ENCODE measurements at regions of chr11 and their contacts with region 1.

Region 1: GRCh38 chr11:128157423-128158298 is 429.7 kb downstream of the ETS1 start:
- DNase-seq: peak; percentile 68
- ATAC-seq: peak; percentile 91
- H3K4me3 Mint-ChIP-seq: peak overlapping the region; percentile 60
- H3K27ac Mint-ChIP-seq: peak overlapping the region; percentile 86
- H3K4me1 Mint-ChIP-seq: peaks cover 10% of the 10 kb centered on the region
- H3K27me3 Mint-ChIP-seq: no peaks in the 10 kb centered on the region

Region 2: DNA sequence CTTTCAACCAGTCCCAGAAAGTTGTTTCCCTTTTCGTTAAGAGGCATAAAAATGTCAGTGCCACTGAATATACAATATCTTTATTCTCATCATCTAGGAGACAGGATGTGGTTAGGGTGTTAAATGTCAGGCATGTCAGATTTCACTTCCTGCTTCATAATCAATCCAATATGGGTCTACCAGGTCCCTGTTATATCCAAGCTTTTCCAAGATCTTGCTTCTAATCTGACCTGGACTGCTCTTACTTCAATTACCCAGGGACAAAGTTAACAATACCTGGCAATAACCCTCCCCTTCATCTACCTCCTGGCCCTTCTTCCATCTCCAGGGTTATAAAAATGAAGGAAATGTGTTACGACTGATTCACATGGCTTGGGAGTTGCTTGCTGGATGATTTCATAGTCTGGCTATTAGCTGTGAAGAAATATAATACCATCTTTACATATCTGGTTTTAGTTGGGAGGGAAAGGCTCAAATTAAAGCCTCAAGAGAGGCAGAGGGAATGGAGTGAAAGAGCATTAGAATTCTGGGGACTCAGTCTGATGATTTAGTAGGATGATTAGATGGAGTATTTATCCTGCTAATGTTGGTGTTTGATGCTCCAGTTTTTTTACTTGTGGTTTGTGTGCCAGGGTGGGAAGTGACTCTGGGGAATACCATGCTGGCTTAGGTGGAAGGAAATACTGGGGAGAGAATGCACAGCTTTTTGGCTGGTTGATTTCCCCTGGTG is 104.6 kb before region 1 on chr11:
- CTCF ChIA-PET with region 1: interaction called, 10 read pairs
- POLR2A ChIA-PET with region 1: no interaction called
- intact Hi-C with region 1: no loop called
- DNase-seq: no peak
- ATAC-seq: peak; percentile 63
- H3K4me3 Mint-ChIP-seq: peak overlapping the region; percentile 25
- H3K27ac Mint-ChIP-seq: peak overlapping the region; percentile 87
- H3K4me1 Mint-ChIP-seq: peaks cover 65% of the 10 kb centered on the region
- H3K27me3 Mint-ChIP-seq: no peaks in the 10 kb centered on the region

Region 3: DNA sequence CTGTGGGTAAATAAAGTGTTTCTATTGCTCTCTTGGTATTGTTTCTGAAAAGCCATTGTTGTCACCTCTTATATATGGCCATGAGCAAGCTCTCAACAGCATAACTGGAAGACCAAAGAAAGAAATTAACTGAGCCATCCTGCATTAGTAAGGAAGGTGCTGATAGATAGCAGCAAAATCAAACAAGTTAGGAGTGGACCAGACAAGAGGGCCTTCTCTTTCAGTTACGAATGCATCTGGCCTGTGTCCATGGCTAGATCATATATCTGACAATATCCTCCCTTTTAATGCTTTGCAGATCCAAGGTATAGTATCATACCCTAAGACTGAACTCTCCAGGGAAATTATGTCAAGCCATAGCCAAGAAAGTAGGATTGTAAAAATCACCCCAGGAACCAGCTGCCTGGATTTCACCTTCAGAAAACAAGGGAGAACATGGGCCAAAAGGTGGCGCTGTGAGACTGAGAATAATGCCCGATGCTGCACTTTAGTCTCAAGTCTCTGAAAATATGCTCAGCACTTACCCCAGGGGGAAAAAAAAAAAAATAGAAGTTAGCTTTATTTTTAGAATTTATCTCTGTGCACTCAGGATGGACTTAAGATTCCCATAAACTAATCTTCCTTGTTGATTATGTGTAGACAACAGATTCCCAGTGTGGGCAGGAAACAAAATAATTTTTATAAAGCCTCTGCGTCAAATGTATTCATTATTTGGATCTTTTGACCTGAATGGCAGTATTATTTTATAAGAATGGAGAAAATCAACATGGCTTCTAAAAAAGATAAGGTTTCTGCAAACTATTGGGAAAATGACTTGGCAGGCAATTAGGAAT is 14.6 kb after region 1 on chr11:
- CTCF ChIA-PET with region 1: interaction called, 139 read pairs
- POLR2A ChIA-PET with region 1: no interaction called
- intact Hi-C with region 1: no loop called
- DNase-seq: peak; percentile 94
- ATAC-seq: peak; percentile 84
- H3K4me3 Mint-ChIP-seq: no peak overlapping the region
- H3K27ac Mint-ChIP-seq: no peak overlapping the region
- H3K4me1 Mint-ChIP-seq: peaks cover 22% of the 10 kb centered on the region
- H3K27me3 Mint-ChIP-seq: peaks cover 5% of the 10 kb centered on the region

Region 4: GRCh38 chr11:128548655-128549255 is 391.1 kb after region 1 on chr11:
- CTCF ChIA-PET with region 1: interaction called, 10 read pairs
- POLR2A ChIA-PET with region 1: no interaction called
- intact Hi-C with region 1: no loop called
- DNase-seq: peak; percentile 51
- ATAC-seq: no peak
- H3K4me3 Mint-ChIP-seq: peak overlapping the region; percentile 67
- H3K27ac Mint-ChIP-seq: peak overlapping the region; percentile 86
- H3K4me1 Mint-ChIP-seq: peaks cover 91% of the 10 kb centered on the region
- H3K27me3 Mint-ChIP-seq: no peaks in the 10 kb centered on the region

Region 5: GRCh38 chr11:128831174-128832120 is 673.8 kb after region 1 on chr11:
- CTCF ChIA-PET with region 1: interaction called, 64 read pairs
- POLR2A ChIA-PET with region 1: no interaction called
- intact Hi-C with region 1: loop called (anchors 1 kb)
- DNase-seq: peak; percentile 93
- ATAC-seq: peak; percentile 81
- H3K4me3 Mint-ChIP-seq: peak overlapping the region; percentile 57
- H3K27ac Mint-ChIP-seq: peak overlapping the region; percentile 93
- H3K4me1 Mint-ChIP-seq: peaks cover 21% of the 10 kb centered on the region
- H3K27me3 Mint-ChIP-seq: no peaks in the 10 kb centered on the region

Region 6: GRCh38 chr11:128884703-128885338 is 727.2 kb after region 1 on chr11:
- CTCF ChIA-PET with region 1: interaction called, 14 read pairs
- POLR2A ChIA-PET with region 1: no interaction called
- intact Hi-C with region 1: no loop called
- DNase-seq: peak; percentile 74
- ATAC-seq: peak; percentile 92
- H3K4me3 Mint-ChIP-seq: no peak overlapping the region
- H3K27ac Mint-ChIP-seq: no peak overlapping the region
- H3K4me1 Mint-ChIP-seq: no peaks in the 10 kb centered on the region
- H3K27me3 Mint-ChIP-seq: peaks cover 54% of the 10 kb centered on the region

Region 7: GRCh38 chr11:129209891-129210830 is 1052.5 kb after region 1 on chr11:
- CTCF ChIA-PET with region 1: no interaction called
- POLR2A ChIA-PET with region 1: no interaction called
- intact Hi-C with region 1: no loop called
- DNase-seq: no peak
- ATAC-seq: no peak
- H3K4me3 Mint-ChIP-seq: no peak overlapping the region
- H3K27ac Mint-ChIP-seq: no peak overlapping the region
- H3K4me1 Mint-ChIP-seq: no peaks in the 10 kb centered on the region
- H3K27me3 Mint-ChIP-seq: no peaks in the 10 kb centered on the region